Activated naive CD4-positive, alpha-beta T cell treated with anti-CD3 and anti-CD28 coated beads, Interleukin-2, amount 10 ng/mL, durations not matched to agents 7 days and 5 days (primary cell): ENCODE measurements at regions of chr4 and their contacts with region 1.

Region 1: GRCh38 chr4:78612398-78613178 is 61.0 kb downstream of the ANXA3 start:
- DNase-seq: peak; percentile 32
- H3K4me3 Mint-ChIP-seq: no peak overlapping the region
- H3K27ac Mint-ChIP-seq: no peak overlapping the region
- H3K4me1 Mint-ChIP-seq: peaks cover 52% of the 10 kb centered on the region
- H3K27me3 Mint-ChIP-seq: peaks cover 2% of the 10 kb centered on the region

Region 2: DNA sequence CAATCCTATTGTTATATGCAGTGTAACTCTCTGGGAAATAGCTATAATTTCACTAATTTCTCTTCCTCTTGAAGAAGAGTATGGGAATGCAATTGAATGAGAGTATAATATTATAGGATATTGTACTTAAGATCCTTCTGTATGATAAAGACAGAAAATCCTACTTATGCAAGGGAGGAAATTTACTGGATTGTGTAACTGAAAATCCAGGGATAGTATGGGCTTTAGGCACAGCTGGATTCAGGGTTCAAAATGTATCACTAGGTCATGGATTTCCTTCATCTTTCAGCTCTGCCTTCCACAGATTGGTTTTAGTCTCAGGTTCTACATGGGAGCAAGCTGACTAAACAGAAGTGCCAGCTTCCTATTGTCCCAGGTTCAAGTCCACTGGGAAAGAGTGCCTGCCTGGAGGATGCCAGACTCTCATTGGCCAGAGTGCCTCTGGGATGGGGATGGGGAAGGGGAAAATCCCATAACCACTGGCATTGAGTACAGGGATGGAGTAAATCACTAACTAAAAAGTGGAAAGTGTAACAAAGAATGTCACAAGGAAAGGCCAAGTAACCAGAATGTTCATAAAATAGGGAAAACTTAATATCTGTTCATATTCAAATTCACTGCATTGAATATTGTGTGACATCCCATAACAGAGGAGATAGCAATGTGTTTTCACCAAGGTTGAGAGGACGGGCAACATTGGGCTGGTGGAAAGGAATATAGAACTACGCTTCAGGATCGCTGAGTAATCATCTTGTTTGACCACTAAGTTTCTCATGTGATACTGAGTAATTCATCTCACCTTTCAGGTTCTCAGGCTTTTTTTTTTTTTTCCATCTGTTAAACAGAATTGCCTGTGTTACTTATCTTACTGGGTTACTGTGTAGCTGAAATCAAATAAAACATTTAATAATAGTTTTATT is 14.7 kb after region 1 on chr4:
- CTCF ChIA-PET with region 1: no interaction called
- DNase-seq: no peak
- H3K4me3 Mint-ChIP-seq: no peak overlapping the region
- H3K27ac Mint-ChIP-seq: no peak overlapping the region
- H3K4me1 Mint-ChIP-seq: peaks cover 12% of the 10 kb centered on the region
- H3K27me3 Mint-ChIP-seq: no peaks in the 10 kb centered on the region

Region 3: GRCh38 chr4:78845472-78845871 is 232.9 kb after region 1 on chr4:
- CTCF ChIA-PET with region 1: no interaction called
- DNase-seq: no peak
- H3K4me3 Mint-ChIP-seq: no peak overlapping the region
- H3K27ac Mint-ChIP-seq: no peak overlapping the region
- H3K4me1 Mint-ChIP-seq: no peaks in the 10 kb centered on the region
- H3K27me3 Mint-ChIP-seq: no peaks in the 10 kb centered on the region

Region 4: DNA sequence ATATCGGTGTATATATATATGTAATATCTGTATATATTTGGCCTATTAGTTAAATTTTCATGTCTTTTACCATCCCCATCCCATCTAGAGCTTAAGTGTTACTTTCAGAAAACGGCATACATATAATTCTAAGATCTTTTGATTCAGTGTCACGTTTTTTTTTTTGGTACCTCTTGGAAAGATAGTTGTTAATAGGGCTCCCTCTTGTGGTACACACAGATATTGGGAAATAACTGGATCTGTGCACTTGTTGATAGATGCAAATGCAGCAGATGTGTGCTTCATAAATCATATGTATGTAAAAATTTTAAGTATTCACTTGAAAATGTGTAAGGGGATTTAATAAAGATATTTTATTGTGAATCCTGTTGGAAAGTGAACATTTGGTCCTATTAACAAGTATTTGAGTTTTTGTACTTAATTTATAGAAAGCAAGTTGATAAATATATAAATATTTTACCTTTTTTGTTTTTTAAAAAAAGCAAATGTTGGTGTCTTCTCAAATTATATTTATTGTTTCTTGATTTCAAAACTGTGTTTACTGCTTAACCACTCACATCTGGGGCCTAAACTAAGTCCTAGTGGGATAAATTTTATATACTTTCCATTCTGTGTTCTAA is 251.9 kb after region 1 on chr4:
- CTCF ChIA-PET with region 1: interaction called, 41 read pairs
- DNase-seq: no peak
- H3K4me3 Mint-ChIP-seq: no peak overlapping the region
- H3K27ac Mint-ChIP-seq: no peak overlapping the region
- H3K4me1 Mint-ChIP-seq: peaks cover 4% of the 10 kb centered on the region
- H3K27me3 Mint-ChIP-seq: no peaks in the 10 kb centered on the region